ENCODE measurements at regions of chr11 and their contacts with region 1.

Region 1: DNA sequence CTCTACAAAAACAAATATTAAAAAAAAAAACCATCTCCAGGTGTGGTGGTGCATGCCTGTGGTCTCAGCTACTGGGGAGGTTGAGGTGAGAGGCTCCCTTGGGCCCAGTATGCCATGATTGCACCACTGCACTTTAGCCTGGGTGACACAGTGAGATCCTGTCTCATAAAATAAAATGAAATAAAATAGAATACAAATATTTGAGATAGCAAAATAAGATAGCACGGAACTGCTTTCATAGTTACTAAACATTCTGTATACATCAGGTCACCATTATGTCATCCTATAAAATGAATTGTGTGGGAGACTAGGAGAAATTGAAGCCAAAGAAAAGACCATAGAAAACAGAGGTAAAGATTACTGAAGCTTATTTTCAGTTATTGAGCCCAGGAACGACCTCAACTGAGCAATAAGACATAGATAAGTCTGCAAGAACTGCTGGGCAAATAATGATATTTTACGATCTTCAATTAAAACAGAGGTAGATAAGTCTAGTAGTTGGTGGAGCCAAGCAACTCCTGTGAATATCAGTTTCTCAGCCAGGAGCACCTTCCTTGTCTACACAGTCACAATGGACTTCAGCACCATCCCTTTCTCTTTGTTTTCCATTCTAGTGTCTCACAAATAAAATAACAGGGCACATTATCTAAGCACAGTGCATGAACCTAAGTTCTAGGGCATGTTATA is 9.9 kb downstream of the OR5M11 start:
- DNase-seq: no peak
- ATAC-seq: no peak
- H3K4me3 ChIP-seq: no peak overlapping the region
- H3K27ac ChIP-seq: no peak overlapping the region
- H3K4me1 ChIP-seq: no peaks in the 10 kb centered on the region
- H3K27me3 ChIP-seq: no peaks in the 10 kb centered on the region
- CTCF ChIP-seq: no peak
- EP300 ChIP-seq: no peak
- POLR2A ChIP-seq: no peak
- RAD21 ChIP-seq: no peak

Region 2: DNA sequence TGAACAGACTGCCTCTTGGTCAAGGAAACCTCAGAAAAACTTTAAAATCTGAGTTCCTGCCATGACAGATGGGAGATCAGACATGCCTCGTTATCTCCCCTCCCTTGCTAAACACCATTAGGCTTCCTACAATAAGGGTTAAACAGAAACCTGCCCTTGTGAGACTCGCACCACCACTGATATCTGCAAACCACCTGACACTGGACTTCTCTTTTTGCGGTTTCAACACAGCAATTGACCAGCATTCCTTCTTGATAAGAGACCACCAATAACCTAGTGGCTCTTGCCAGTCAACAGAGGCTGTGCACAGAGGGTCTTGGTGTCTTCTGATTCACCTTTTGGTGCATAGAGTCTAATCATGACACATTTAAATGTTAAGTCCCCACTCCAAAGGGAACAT is 46.4 kb before region 1 on chr11:
- CTCF ChIA-PET with region 1: no interaction called
- POLR2A ChIA-PET with region 1: no interaction called
- RAD21 ChIA-PET with region 1: no interaction called
- SMC1A ChIA-PET with region 1: no interaction called
- in situ Hi-C with region 1: no loop called
- intact Hi-C with region 1: loop called (anchors 5 kb)
- DNase-seq: no peak
- ATAC-seq: no peak
- H3K4me3 ChIP-seq: no peak overlapping the region
- H3K27ac ChIP-seq: no peak overlapping the region
- H3K4me1 ChIP-seq: no peaks in the 10 kb centered on the region
- H3K27me3 ChIP-seq: no peaks in the 10 kb centered on the region
- CTCF ChIP-seq: no peak
- EP300 ChIP-seq: no peak
- POLR2A ChIP-seq: no peak
- RAD21 ChIP-seq: no peak

Region 3: GRCh38 chr11:56509439-56509838 is 23.8 kb before region 1 on chr11:
- CTCF ChIA-PET with region 1: no interaction called
- POLR2A ChIA-PET with region 1: no interaction called
- RAD21 ChIA-PET with region 1: no interaction called
- SMC1A ChIA-PET with region 1: no interaction called
- in situ Hi-C with region 1: no loop called
- intact Hi-C with region 1: no loop called
- DNase-seq: no peak
- ATAC-seq: no peak
- H3K4me3 ChIP-seq: no peak overlapping the region
- H3K27ac ChIP-seq: no peak overlapping the region
- H3K4me1 ChIP-seq: no peaks in the 10 kb centered on the region
- H3K27me3 ChIP-seq: no peaks in the 10 kb centered on the region
- CTCF ChIP-seq: no peak
- EP300 ChIP-seq: no peak
- POLR2A ChIP-seq: no peak
- RAD21 ChIP-seq: no peak

Measured in GM12878 (cell line).